Sigmoid colon (tissue), 7 donors: ENCODE measurements at regions of chr19 and their contacts with region 1.

Region 1: GRCh38 chr19:44770550-44771257 is 7.0 kb upstream of the CBLC start:
- DNase-seq: peak; percentile 94
- H3K4me3 ChIP-seq: no peak overlapping the region
- H3K27ac ChIP-seq: no peak overlapping the region
- H3K4me1 ChIP-seq: peaks cover 0 to 6% (median 0%) of the 10 kb centered on the region in 4 donors
- H3K27me3 ChIP-seq: no peaks in the 10 kb centered on the region
- CTCF ChIP-seq: peak; percentile 75 to 94 (median 84)
- EP300 ChIP-seq: no peak
- POLR2A ChIP-seq: no peak

Region 2: DNA sequence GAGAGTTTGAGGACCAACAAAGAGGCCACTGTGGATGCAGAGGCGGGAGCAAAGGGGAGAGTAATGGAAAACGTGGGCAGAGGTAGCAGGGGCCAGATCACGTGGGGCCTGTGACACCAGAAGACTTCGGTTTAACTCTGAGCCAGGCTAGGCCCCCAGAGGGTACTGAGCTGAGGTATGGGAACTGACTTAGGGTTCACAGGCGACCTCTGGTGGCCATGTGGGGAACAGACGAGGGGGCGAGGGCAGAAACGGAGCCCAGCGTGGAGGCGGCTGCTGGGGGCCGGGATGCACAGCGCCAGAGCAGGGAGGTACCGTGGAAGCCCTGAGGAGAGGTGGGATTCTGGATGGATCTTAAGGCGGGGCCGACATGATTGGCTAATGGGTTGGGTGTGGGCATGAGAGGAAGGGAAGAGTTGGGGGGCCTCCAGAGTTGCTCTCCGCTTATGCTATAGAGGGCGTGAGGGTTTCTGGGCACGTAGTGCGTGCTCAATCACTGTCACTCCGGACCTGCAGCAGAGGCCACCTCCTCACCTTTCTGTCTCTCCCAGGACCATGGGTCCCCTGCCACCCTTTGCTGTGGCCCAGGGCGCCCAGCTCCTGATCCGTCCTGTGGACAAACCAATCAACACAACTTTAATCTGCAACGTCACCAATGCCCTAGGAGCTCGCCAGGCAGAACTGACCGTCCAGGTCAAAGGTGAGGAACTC is 113.3 kb before region 1 on chr19:
- intact Hi-C with region 1: no loop called
- DNase-seq: peak; percentile 69
- H3K4me3 ChIP-seq: no peak overlapping the region
- H3K27ac ChIP-seq: no peak overlapping the region
- H3K4me1 ChIP-seq: peaks cover 0 to 5% (median 0%) of the 10 kb centered on the region in 4 donors
- H3K27me3 ChIP-seq: no peaks in the 10 kb centered on the region
- CTCF ChIP-seq: peak; percentile 71 to 93 (median 83)
- EP300 ChIP-seq: no peak
- POLR2A ChIP-seq: no peak

Region 3: GRCh38 chr19:44689056-44689895 is 81.4 kb before region 1 on chr19:
- intact Hi-C with region 1: loop called (anchors 1 kb)
- DNase-seq: peak; percentile 77
- H3K4me3 ChIP-seq: no peak overlapping the region
- H3K27ac ChIP-seq: no peak overlapping the region
- H3K4me1 ChIP-seq: no peaks in the 10 kb centered on the region
- H3K27me3 ChIP-seq: peaks cover 0 to 3% (median 0%) of the 10 kb centered on the region in 3 donors
- CTCF ChIP-seq: peak; percentile 70 to 93 (median 84)
- EP300 ChIP-seq: no peak
- POLR2A ChIP-seq: no peak

Region 4: GRCh38 chr19:44723952-44724319 is 46.8 kb before region 1 on chr19:
- intact Hi-C with region 1: loop called (anchors 1 kb)
- DNase-seq: peak; percentile 92
- H3K4me3 ChIP-seq: no peak overlapping the region
- H3K27ac ChIP-seq: peak overlapping the region in 2 of 4 donors; percentile 3 to 30
- H3K4me1 ChIP-seq: peaks cover 0 to 38% (median 23%) of the 10 kb centered on the region in 4 donors
- H3K27me3 ChIP-seq: no peaks in the 10 kb centered on the region
- CTCF ChIP-seq: peak; percentile 96 to 98 (median 98)
- EP300 ChIP-seq: no peak
- POLR2A ChIP-seq: no peak